ENCODE measurements at regions of chr5 and their contacts with region 1.

Region 1: DNA sequence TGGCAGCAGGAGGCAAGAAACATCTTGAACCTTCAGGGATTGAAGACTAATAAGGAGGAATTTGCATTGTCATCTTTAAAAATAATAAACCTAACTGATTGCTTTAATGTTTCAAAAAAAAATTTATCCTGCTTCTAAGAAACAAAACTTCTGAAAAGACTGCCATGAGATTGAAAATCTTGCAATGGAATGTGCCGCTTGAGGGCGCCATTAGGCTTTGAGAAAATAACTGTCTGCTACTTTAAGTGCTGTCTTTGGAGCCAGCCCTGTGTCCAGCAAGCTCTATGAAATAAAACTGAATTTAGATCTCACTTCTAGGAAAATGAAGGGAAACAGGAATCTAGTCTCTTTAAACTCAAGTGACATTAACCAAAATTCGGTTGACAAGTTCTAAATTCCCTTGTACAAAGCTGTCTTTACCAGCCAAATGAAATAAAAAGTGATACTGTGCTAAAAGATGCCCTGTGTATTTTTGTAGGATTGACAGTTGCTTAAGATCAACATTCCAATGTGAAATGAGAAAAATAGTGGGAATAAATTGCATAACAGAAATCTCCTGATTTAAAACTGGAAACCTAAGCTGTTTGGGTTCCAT is 79.4 kb downstream of the ESM1 start:
- DNase-seq: peak; percentile 64 to 80
- ATAC-seq: peak in 2 of 3 donors; percentile 46 to 63
- H3K4me3 ChIP-seq: no peak overlapping the region
- H3K4me3 Mint-ChIP-seq: no peak overlapping the region
- H3K27ac ChIP-seq: no peak overlapping the region
- H3K27ac Mint-ChIP-seq: no peak overlapping the region
- H3K4me1 ChIP-seq: peaks cover 5% of the 10 kb centered on the region
- H3K4me1 Mint-ChIP-seq: peaks cover 5 to 9% of the 10 kb centered on the region in 2 donors
- H3K27me3 ChIP-seq: no peaks in the 10 kb centered on the region
- H3K27me3 Mint-ChIP-seq: peaks cover 3 to 6% of the 10 kb centered on the region in 2 donors
- CTCF ChIP-seq: peak; percentile 92

Region 2: DNA sequence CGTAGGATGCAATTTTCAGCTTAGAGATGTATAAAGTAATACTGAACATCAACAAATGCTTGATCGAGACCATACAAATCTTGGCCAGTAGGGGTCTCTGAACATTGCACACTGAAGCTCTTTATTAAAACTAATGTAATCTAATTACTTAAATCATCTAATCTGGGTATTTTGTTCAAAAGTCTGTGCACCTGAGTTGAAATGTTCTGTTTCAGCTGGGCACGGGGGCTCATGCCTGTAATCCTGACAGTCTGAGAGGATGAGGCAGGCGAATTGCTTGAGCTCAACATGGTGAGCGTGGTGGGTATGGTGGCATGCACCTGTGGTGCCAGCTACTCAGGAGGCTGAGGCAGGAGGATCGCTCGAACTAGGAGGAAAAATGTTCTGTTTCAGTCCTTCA is 38.3 kb after region 1 on chr5:
- intact Hi-C with region 1: loop called (anchors 1 kb)
- DNase-seq: peak in 1 of 2 donors; percentile 82
- ATAC-seq: peak in 2 of 3 donors; percentile 70 to 71
- H3K4me3 ChIP-seq: no peak overlapping the region
- H3K4me3 Mint-ChIP-seq: no peak overlapping the region
- H3K27ac ChIP-seq: no peak overlapping the region
- H3K27ac Mint-ChIP-seq: no peak overlapping the region
- H3K4me1 ChIP-seq: peaks cover 3% of the 10 kb centered on the region
- H3K4me1 Mint-ChIP-seq: peaks cover 5% of the 10 kb centered on the region in 2 donors
- H3K27me3 ChIP-seq: no peaks in the 10 kb centered on the region
- H3K27me3 Mint-ChIP-seq: no peaks in the 10 kb centered on the region
- CTCF ChIP-seq: peak; percentile 87

Region 3: DNA sequence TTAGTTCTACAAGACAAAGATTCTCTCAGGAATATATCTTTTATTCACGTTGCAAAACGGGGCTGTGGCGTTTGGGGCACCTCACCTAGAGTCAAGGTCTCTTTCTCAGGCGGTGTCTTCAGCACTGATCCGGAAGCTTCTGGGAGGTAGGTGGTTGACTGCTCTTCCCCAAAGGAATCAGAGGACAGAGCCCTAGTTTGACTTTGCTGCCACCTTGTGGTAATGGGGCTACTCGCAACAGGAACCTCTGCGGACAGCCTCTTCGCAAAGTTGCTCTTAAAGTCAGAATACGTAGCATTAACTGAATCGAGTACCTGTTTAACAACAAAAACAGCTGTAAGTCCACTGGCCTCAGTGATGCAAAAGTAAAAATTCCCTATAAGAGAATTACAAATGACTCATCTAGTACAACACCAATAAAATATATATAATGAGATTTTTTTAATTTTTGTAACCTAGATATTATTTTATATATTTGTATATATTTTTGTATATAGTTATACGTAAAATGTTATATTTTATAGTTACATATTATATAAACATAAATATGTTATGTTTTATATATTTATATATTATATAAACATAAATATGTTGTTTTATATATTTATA is 240.6 kb after region 1 on chr5:
- intact Hi-C with region 1: loop called (anchors 1 kb)
- DNase-seq: peak; percentile 67 to 92
- ATAC-seq: peak; percentile 86 to 99 (median 98)
- H3K4me3 ChIP-seq: no peak overlapping the region
- H3K4me3 Mint-ChIP-seq: peak overlapping the region; percentile 35
- H3K27ac ChIP-seq: no peak overlapping the region
- H3K27ac Mint-ChIP-seq: no peak overlapping the region
- H3K4me1 ChIP-seq: peaks cover 7% of the 10 kb centered on the region
- H3K4me1 Mint-ChIP-seq: peaks cover 14 to 15% of the 10 kb centered on the region in 2 donors
- H3K27me3 ChIP-seq: no peaks in the 10 kb centered on the region
- H3K27me3 Mint-ChIP-seq: peaks cover 0 to 4% of the 10 kb centered on the region in 2 donors
- CTCF ChIP-seq: peak; percentile 97

Region 4: DNA sequence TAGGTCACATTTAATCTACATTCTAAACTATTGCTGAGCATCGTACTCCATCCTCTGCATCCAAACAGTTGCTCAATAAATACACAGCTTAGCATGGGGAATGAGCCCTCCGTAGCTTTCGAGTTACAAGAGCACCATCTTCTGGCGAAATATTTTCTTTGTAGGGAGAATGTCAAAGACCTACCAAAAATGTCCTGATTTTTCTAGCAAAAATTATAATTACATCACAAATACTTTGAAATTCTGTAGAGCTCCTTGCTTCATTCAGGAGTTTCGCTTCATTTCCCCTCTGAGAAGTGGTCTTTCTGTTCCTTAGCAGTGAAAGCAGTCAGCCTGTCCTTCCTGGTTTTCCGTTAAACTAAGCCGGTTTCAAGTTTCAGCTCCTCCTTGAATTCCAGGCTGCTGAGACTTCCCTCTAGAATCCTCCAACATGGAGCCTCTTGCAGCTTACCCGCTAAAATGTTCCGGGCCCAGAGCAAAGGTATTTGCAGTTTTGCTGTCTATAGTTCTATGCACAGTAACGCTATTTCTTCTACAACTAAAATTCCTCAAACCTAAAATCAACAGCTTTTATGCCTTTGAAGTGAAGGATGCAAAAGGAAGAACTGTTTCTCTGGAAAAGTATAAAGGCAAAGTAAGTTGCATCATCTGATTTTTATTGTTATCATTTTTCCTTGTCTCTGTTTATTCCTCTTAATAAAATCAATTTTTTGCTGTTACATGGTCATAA is 253.9 kb after region 1 on chr5 and contains the start of gene GPX8:
- intact Hi-C with region 1: loop called (anchors 1 kb)
- DNase-seq: peak in 1 of 2 donors; percentile 77
- ATAC-seq: peak; percentile 64 to 80 (median 78)
- H3K4me3 ChIP-seq: no peak within 1 kb of the TSS
- H3K4me3 Mint-ChIP-seq: no peak within 1 kb of the TSS
- H3K27ac ChIP-seq: no peak within 1 kb of the TSS
- H3K27ac Mint-ChIP-seq: no peak within 1 kb of the TSS
- H3K4me1 ChIP-seq: no peaks in the 10 kb centered on the region
- H3K4me1 Mint-ChIP-seq: peaks cover 0 to 6% of the 10 kb centered on the region in 2 donors
- H3K27me3 ChIP-seq: peaks cover 20% of the 10 kb centered on the region
- H3K27me3 Mint-ChIP-seq: peaks cover 33 to 39% of the 10 kb centered on the region in 2 donors
- CTCF ChIP-seq: peak; percentile 59
- total RNA-seq, gene GPX8: not detected

Measured in natural killer cell (primary cell).